Heart right ventricle (tissue), 16 donors: ENCODE measurements at regions of chr6 and their contacts with region 1.

Region 1: DNA sequence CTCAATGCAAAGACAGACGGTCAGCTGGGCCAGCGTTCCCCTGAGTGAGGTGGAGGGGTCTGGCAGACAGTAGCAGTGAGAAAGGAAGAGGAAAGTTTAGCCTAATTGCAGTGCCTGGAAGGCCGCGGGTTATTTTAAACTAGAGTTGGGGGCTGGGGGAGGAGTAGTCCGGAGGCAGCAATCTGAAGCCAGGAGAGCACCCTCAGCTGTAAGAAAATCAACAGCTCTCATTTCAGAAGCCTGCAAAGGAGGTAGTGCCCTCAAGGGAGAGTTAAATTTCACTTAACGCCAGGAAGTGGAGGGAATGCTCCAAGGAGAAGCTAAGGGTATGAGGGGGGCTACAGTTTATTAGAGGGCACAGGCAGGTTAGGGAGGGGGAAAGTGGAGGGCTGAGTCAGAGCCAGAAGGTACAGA is 26.9 kb downstream of the RING1 start:
- DNase-seq: no peak
- ATAC-seq: no peak
- H3K4me3 ChIP-seq: no peak overlapping the region
- H3K27ac ChIP-seq: no peak overlapping the region
- H3K4me1 ChIP-seq: no peaks in the 10 kb centered on the region
- H3K27me3 ChIP-seq: peaks cover 0 to 47% (median 22%) of the 10 kb centered on the region in 7 donors
- CTCF ChIP-seq: no peak

Region 2: DNA sequence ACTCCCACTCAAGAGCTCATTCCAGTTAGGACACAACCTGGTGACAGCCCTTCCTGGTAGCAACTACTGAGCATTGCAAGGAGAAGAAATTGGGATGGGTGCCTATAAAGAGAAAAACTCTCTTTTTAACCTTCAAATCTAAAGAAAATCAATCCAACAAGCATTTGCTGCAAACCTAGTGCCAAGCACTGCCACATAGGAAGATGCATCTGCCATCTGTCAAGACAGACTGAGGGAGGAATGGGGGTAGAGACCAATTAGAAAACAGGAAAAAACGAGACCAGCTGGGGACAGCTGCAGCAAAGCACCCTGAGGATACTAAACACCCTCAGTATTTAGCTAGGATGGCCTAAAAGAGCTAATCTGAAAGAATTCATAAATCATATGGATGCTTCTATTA is 322.3 kb before region 1 on chr6:
- intact Hi-C with region 1: loop called in 1 of 10 experiments (anchors 10 kb)
- DNase-seq: no peak
- ATAC-seq: no peak
- H3K4me3 ChIP-seq: no peak overlapping the region
- H3K27ac ChIP-seq: no peak overlapping the region
- H3K4me1 ChIP-seq: peaks cover 0 to 11% (median 0%) of the 10 kb centered on the region in 9 donors
- H3K27me3 ChIP-seq: peaks cover 0 to 14% (median 4%) of the 10 kb centered on the region in 7 donors
- CTCF ChIP-seq: no peak

Region 3: GRCh38 chr6:33000055-33000454 is 235.2 kb before region 1 on chr6:
- intact Hi-C with region 1: loop called in 2 of 10 experiments (anchors 5 to 10 kb)
- DNase-seq: no peak
- ATAC-seq: no peak
- H3K4me3 ChIP-seq: no peak overlapping the region
- H3K27ac ChIP-seq: no peak overlapping the region
- H3K4me1 ChIP-seq: no peaks in the 10 kb centered on the region
- H3K27me3 ChIP-seq: peaks cover 0 to 48% (median 7%) of the 10 kb centered on the region in 7 donors
- CTCF ChIP-seq: peak in 5 of 9 donors; percentile 28 to 51 (median 45)

Region 4: DNA sequence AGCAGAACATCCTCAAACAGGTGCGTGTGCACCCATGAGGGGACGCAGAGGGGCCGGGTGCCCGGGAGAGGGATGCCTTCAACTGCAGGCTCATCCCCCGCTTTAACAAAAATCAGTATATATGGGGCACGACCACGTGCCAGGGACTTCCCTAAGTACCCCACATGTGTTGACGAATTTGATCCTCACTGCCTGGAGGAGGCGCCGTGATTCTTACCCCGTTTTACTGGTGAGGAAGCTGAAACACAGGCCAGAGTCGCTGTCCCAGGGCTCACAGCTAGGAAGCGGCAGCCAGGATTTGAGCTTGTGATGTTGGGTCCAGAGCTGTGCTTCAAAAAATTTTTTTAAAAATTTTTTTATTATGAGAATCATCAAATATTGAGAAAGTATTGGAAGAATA is 430.7 kb after region 1 on chr6:
- intact Hi-C with region 1: no loop called
- DNase-seq: no peak
- ATAC-seq: no peak
- H3K4me3 ChIP-seq: no peak overlapping the region
- H3K27ac ChIP-seq: no peak overlapping the region
- H3K4me1 ChIP-seq: no peaks in the 10 kb centered on the region
- H3K27me3 ChIP-seq: no peaks in the 10 kb centered on the region
- CTCF ChIP-seq: no peak